AG04450 (cell line): ENCODE measurements at regions of chr12 and their contacts with region 1.

Region 1: GRCh38 chr12:32413412-32413811 is 14.1 kb downstream of the FGD4 start:
- DNase-seq: no peak
- H3K4me3 ChIP-seq: no peak overlapping the region
- H3K27ac ChIP-seq: no peak overlapping the region
- H3K27me3 ChIP-seq: no peaks in the 10 kb centered on the region
- CTCF ChIP-seq: no peak

Region 2: DNA sequence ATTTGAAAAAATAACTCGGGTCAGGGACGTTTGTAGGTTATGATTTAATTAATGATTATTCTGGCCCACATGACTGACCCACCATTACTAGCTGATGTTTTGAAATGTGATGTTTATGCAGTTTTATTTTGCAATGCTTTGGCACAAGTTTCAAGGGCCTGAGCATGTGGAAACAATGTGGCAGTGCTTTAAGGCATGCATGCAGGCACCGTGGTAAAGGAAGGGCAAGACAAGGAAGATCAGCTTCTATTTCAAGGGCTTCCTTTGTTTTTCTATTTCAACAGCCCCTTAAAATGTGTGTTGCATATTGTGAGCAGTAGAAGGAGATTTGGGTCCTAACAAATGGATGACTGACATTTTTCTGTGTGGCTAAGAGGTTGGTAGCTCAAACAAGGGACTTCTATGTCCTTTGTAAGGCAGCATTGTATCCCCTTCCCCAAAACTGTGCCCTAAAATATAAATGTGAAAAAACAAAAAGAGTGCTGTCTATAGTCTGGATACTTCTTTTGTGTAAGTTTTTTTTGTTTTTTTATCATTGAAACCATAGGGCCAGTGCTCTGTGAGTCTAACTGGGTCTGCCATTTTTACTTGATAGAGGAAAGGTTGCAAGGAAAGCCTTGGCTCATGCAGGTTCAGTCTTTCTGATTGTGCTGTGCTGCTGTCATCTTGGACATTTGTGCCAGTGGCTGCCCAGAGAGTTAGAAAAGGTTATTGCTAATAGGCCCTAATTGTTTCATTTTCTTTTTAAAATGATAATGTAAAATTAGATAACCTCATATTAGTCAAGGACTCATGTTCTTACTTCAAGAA is 89.5 kb after region 1 on chr12:
- CTCF ChIA-PET with region 1: no interaction called
- POLR2A ChIA-PET with region 1: interaction called, 10 read pairs
- DNase-seq: no peak
- H3K4me3 ChIP-seq: no peak overlapping the region
- H3K27ac ChIP-seq: no peak overlapping the region
- H3K27me3 ChIP-seq: no peaks in the 10 kb centered on the region
- CTCF ChIP-seq: no peak

Region 3: DNA sequence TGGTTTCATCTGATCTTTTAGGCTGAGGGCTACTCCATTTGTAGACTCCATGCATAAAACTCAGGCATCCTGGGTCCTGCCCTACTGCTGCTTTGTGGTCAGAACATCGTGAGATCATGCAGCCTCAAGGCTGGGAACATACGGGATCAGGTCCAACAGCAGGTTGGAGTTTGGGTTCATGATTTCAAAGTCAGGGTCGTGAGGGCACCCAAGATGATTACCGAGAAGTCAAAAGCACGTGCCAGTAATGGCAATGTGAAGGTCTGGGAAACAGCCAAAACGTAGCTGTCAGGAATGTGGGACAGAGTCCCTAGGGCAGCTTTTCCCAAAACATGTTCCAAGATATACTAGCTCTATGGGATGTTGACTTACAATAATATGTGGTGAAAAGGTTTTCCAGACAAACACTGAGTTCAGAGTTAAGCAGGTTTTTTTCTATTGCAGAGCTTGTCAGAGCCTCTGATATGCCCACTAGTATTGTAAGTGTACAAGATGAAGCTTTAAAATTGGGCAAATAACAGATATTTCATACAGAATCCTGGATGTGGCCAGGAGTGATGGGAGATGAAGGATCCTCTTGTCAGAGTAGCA is 135.4 kb after region 1 on chr12:
- CTCF ChIA-PET with region 1: no interaction called
- POLR2A ChIA-PET with region 1: no interaction called
- DNase-seq: no peak
- H3K4me3 ChIP-seq: no peak overlapping the region
- H3K27ac ChIP-seq: peak overlapping the region; percentile 41
- H3K27me3 ChIP-seq: no peaks in the 10 kb centered on the region
- CTCF ChIP-seq: no peak